AG04450 (cell line): ENCODE measurements at regions of chr17 and their contacts with region 1.

Region 1: DNA sequence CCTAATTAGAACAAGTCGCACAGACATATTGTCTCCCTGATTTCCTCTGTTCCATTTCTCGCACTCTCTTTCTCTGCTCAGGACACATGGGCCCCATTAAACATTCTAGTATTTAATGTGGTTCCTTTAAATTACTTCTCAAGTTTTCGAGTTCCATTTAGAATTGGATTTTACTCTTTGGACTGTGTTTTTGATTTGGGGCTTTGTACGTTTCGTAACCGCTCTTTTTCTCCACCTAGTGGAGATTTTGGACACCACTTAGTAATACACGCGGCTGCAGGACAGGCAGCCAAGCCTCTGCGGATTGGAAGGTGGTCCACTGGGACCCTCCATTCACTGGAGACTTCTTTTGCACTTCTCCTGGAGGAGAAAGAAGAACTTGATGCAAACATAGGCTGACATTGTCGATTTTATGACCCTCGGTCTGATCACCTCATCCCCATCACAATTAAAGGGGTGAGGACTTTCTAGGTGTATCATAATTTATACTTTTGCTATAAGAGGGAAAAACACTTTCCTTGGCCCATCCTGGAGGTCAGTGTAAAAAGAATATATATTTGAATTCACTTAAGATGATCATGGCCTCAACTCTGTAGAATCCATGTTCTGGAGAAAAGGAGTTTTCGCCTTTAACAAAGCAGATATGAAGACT is 85.7 kb downstream of the NOG start:
- DNase-seq: no peak
- H3K4me3 ChIP-seq: peak overlapping the region; percentile 34
- H3K27ac ChIP-seq: no peak overlapping the region
- H3K27me3 ChIP-seq: peaks cover 32% of the 10 kb centered on the region
- CTCF ChIP-seq: peak; percentile 73

Region 2: GRCh38 chr17:56592487-56593085 is 86.7 kb before region 1 on chr17:
- CTCF ChIA-PET with region 1: interaction called, 12 read pairs
- POLR2A ChIA-PET with region 1: no interaction called
- DNase-seq: no peak
- H3K4me3 ChIP-seq: peak overlapping the region; percentile 67
- H3K27ac ChIP-seq: no peak overlapping the region
- H3K27me3 ChIP-seq: peaks cover 37% of the 10 kb centered on the region
- CTCF ChIP-seq: peak; percentile 59

Region 3: GRCh38 chr17:56699186-56699895 is 20.1 kb after region 1 on chr17:
- CTCF ChIA-PET with region 1: interaction called, 3 read pairs
- POLR2A ChIA-PET with region 1: interaction called, 12 read pairs
- DNase-seq: peak; percentile 94
- H3K4me3 ChIP-seq: 0 out of 2 replicates have a peak overlapping the region, but pooled peaks have one; percentile 12
- H3K27ac ChIP-seq: peak overlapping the region; percentile 79
- H3K27me3 ChIP-seq: no peaks in the 10 kb centered on the region
- CTCF ChIP-seq: no peak

Region 4: GRCh38 chr17:56727876-56728620 is 48.8 kb after region 1 on chr17:
- CTCF ChIA-PET with region 1: no interaction called
- POLR2A ChIA-PET with region 1: no interaction called
- DNase-seq: no peak
- H3K4me3 ChIP-seq: no peak overlapping the region
- H3K27ac ChIP-seq: no peak overlapping the region
- H3K27me3 ChIP-seq: peaks cover 26% of the 10 kb centered on the region
- CTCF ChIP-seq: no peak

Region 5: GRCh38 chr17:56819431-56820145 is 140.3 kb after region 1 on chr17:
- CTCF ChIA-PET with region 1: no interaction called
- POLR2A ChIA-PET with region 1: no interaction called
- DNase-seq: peak; percentile 18
- H3K4me3 ChIP-seq: no peak overlapping the region
- H3K27ac ChIP-seq: no peak overlapping the region
- H3K27me3 ChIP-seq: no peaks in the 10 kb centered on the region
- CTCF ChIP-seq: peak; percentile 80